ENCODE measurements at regions of chr6 and their contacts with region 1.

Region 1: DNA sequence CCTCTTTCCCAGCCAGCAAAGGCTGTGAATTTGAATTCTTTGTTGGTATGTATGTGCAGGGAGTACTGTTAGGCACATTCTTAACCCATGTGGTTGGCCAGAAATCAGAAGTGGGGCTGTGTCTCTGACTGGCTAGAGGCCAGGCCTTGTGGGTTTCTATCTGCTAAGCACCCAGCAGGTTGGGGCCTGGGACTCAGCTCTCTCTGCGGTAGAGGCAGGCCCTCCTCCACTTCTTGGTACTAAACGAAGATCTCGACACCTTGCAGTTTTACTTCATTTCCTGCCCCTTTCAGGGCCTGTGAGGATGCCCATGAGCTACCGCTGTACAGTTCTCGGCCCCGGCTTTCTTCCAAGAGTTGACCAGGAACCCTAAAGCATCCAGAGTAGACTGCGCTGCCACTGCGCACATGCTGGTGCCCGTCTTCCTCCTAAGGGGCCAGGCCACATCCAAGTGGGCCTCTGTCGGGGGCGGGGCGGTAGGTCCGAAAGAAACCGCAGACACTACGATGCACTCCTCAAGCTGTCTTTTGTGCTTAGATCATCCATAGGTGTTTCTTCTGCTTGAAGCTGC is 51.1 kb downstream of the TCP11 start:
- H3K4me3 Mint-ChIP-seq: no peak overlapping the region
- H3K27ac Mint-ChIP-seq: no peak overlapping the region
- H3K4me1 Mint-ChIP-seq: no peaks in the 10 kb centered on the region
- H3K27me3 Mint-ChIP-seq: no peaks in the 10 kb centered on the region

Region 2: GRCh38 chr6:34709386-34709785 is 380.6 kb before region 1 on chr6:
- intact Hi-C with region 1: no loop called
- H3K4me3 Mint-ChIP-seq: no peak overlapping the region
- H3K27ac Mint-ChIP-seq: no peak overlapping the region
- H3K4me1 Mint-ChIP-seq: no peaks in the 10 kb centered on the region
- H3K27me3 Mint-ChIP-seq: no peaks in the 10 kb centered on the region

Region 3: GRCh38 chr6:35161776-35162607 is 72.0 kb after region 1 on chr6:
- intact Hi-C with region 1: loop called (anchors 2 kb)
- H3K4me3 Mint-ChIP-seq: no peak overlapping the region
- H3K27ac Mint-ChIP-seq: no peak overlapping the region
- H3K4me1 Mint-ChIP-seq: no peaks in the 10 kb centered on the region
- H3K27me3 Mint-ChIP-seq: peaks cover 13% of the 10 kb centered on the region